T-cell (primary cell): ENCODE measurements at regions of chr1 and their contacts with region 1.

Region 1: DNA sequence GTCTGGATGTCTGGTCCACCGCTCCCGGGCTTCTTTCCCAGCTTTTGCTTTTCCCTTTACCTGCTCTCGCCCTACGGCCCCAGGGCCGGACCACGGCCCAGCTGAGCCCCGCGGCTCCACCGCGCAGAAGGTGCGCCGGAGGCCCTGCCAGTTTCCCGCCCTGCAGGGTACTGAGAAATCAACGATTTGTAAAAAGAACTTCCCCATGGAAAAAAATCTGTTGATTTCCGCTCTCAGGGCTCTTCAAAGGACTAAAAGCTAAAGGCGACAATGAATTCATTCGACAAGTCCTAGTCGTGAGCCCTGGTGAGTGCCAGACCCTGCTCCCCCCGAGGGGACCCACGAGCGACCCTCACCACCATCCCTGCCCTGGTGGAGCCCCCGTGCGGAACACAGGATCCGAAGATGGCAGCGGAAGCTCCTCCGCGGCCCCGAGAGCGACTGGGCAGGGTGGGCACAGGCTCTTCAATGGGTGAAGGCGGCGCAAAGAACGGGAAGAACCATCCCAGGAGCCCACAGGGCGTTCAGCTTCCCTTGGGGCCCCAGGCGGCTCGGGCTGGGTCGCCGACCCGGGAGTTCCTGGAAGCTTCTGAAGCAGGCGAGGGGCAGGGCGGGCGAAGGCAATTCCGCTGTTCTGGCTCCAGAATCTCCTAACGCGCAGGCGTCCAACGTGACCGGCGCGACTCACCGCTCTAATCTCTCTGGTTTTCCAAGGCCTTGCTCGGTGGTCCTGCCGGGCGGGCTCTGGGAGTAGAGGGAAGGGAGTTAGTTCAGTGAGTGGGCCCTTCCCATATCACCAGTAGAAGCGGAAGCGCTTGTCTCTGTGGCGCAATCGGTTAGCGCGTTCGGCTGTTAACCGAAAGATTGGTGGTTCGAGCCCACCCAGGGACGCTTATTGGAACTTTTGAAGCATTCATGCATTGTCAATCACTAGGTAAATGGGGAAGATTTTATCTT is 6.6 kb upstream of the RNU1-2 start:
- DNase-seq: peak in 31 of 35 experiments; percentile 9 to 64 (median 39)
- ATAC-seq: peak; percentile 75 to 84 (median 81)
- H3K4me3 ChIP-seq: peak overlapping the region; percentile 64 to 88
- H3K4me3 Mint-ChIP-seq: peak overlapping the region; percentile 94 to 97 (median 94)
- H3K27ac ChIP-seq: peak overlapping the region; percentile 61
- H3K27ac Mint-ChIP-seq: peak overlapping the region; percentile 98
- H3K4me1 ChIP-seq: peaks cover 8 to 10% of the 10 kb centered on the region in 2 experiments
- H3K4me1 Mint-ChIP-seq: peaks cover 21 to 31% (median 27%) of the 10 kb centered on the region in 3 donors
- H3K27me3 ChIP-seq: peaks cover 0 to 3% of the 10 kb centered on the region in 2 experiments
- H3K27me3 Mint-ChIP-seq: peaks cover 0 to 1% of the 10 kb centered on the region in 2 donors

Region 2: GRCh38 chr1:15152318-15153183 is 1736.6 kb before region 1 on chr1:
- CTCF ChIA-PET with region 1: no interaction called
- POLR2A ChIA-PET with region 1: no interaction called
- DNase-seq: no peak
- ATAC-seq: no peak
- H3K4me3 ChIP-seq: peak overlapping the region in 1 of 2 donors; percentile 27
- H3K4me3 Mint-ChIP-seq: peak overlapping the region; percentile 53 to 57 (median 54)
- H3K27ac ChIP-seq: no peak overlapping the region
- H3K27ac Mint-ChIP-seq: no peak overlapping the region
- H3K4me1 ChIP-seq: peaks cover 3 to 34% of the 10 kb centered on the region in 2 experiments
- H3K4me1 Mint-ChIP-seq: peaks cover 21 to 39% (median 30%) of the 10 kb centered on the region in 3 donors
- H3K27me3 ChIP-seq: peaks cover 0 to 58% of the 10 kb centered on the region in 2 experiments
- H3K27me3 Mint-ChIP-seq: peaks cover 57 to 65% of the 10 kb centered on the region in 2 donors

Region 3: GRCh38 chr1:16921391-16922185 is 32.5 kb after region 1 on chr1 and contains the start of gene CROCC:
- CTCF ChIA-PET with region 1: no interaction called
- POLR2A ChIA-PET with region 1: interaction called in 1 of 2 experiments, 12 read pairs
- DNase-seq: peak in 28 of 35 experiments; percentile 8 to 62 (median 38)
- ATAC-seq: peak; percentile 66 to 90 (median 84)
- H3K4me3 ChIP-seq: peak within 1 kb of the TSS; percentile 13 to 26
- H3K4me3 Mint-ChIP-seq: peak within 1 kb of the TSS; percentile 46 to 77 (median 60)
- H3K27ac ChIP-seq: no peak within 1 kb of the TSS
- H3K27ac Mint-ChIP-seq: peak within 1 kb of the TSS in 1 of 2 donors; percentile 68
- H3K4me1 ChIP-seq: peaks cover 0 to 18% of the 10 kb centered on the region in 2 experiments
- H3K4me1 Mint-ChIP-seq: peaks cover 19 to 28% (median 27%) of the 10 kb centered on the region in 3 donors
- H3K27me3 ChIP-seq: no peaks in the 10 kb centered on the region
- H3K27me3 Mint-ChIP-seq: no peaks in the 10 kb centered on the region
- total RNA-seq, gene CROCC: 59.3 to 104 (median 86.4) TPM

Region 4: GRCh38 chr1:17250601-17251000 is 361.5 kb after region 1 on chr1:
- CTCF ChIA-PET with region 1: no interaction called
- POLR2A ChIA-PET with region 1: no interaction called
- DNase-seq: peak in 1 of 35 experiments; percentile 4
- ATAC-seq: no peak
- H3K4me3 ChIP-seq: no peak overlapping the region
- H3K4me3 Mint-ChIP-seq: no peak overlapping the region
- H3K27ac ChIP-seq: no peak overlapping the region
- H3K27ac Mint-ChIP-seq: peak overlapping the region in 1 of 2 donors; percentile 49
- H3K4me1 ChIP-seq: no peaks in the 10 kb centered on the region
- H3K4me1 Mint-ChIP-seq: no peaks in the 10 kb centered on the region
- H3K27me3 ChIP-seq: peaks cover 0 to 34% of the 10 kb centered on the region in 2 experiments
- H3K27me3 Mint-ChIP-seq: peaks cover 13 to 27% of the 10 kb centered on the region in 2 donors